ENCODE measurements at regions of chr2 and their contacts with region 1.

Region 1: DNA sequence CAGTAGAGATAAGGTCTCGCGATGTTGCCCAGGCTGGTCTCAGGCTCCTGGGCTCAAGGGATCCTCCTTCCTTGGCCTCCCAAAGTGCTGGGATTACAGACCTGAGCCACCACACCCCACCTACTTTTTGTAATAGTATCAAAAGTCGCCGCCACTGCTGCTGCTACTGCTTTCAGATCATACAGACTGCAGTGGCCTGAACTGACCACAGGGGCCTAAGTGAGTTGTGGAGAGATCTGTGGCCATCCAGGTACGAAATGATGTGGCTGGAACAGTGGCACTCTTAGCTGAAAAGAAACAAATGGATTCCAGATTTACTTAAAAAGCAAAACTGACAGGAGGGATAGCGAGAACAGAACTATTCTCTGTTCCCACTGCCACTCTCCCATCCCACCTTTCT is 32.9 kb upstream of the POMC start:
- DNase-seq: no peak
- H3K4me3 ChIP-seq: no peak overlapping the region
- H3K27ac ChIP-seq: no peak overlapping the region
- H3K4me1 ChIP-seq: no peaks in the 10 kb centered on the region
- H3K27me3 ChIP-seq: no peaks in the 10 kb centered on the region
- CTCF ChIP-seq: no peak

Region 2: DNA sequence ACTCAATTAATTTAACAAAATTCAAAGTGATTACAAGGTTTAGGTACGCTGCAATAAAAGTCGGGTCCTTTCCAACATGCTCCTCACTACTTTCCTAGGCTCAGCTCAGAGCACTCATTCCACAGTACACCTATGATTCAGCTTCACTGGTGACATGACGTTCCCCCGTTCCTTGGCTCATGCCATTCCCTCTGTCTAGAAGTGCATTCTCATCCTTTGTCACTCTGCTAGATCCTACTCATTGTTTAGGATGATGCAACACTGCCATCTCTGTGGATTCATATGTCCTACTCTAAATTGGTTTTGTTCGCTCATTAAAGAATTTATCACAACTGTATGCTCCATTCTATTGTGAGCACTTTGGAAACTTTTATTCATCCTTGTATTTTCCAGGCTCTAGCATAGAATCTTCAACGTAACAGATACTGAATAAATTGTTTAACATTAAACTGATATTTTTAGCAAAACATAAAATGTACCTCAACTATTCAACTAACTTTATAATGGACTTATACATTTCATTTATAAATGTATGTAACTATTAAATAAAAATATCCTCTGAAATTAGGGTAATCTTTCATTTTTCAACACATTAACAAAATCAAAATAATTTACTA is 947.9 kb before region 1 on chr2:
- CTCF ChIA-PET with region 1: no interaction called
- POLR2A ChIA-PET with region 1: no interaction called
- intact Hi-C with region 1: no loop called
- DNase-seq: peak; percentile 13
- H3K4me3 ChIP-seq: no peak overlapping the region
- H3K27ac ChIP-seq: no peak overlapping the region
- H3K4me1 ChIP-seq: no peaks in the 10 kb centered on the region
- H3K27me3 ChIP-seq: no peaks in the 10 kb centered on the region
- CTCF ChIP-seq: no peak

Region 3: GRCh38 chr2:24409700-24410556 is 791.3 kb before region 1 on chr2:
- CTCF ChIA-PET with region 1: no interaction called
- POLR2A ChIA-PET with region 1: no interaction called
- intact Hi-C with region 1: loop called (anchors 1 kb)
- DNase-seq: peak; percentile 83
- H3K4me3 ChIP-seq: no peak overlapping the region
- H3K27ac ChIP-seq: no peak overlapping the region
- H3K4me1 ChIP-seq: peaks cover 3% of the 10 kb centered on the region
- H3K27me3 ChIP-seq: no peaks in the 10 kb centered on the region
- CTCF ChIP-seq: peak; percentile 87

Region 4: GRCh38 chr2:24833821-24834732 is 367.2 kb before region 1 on chr2:
- CTCF ChIA-PET with region 1: no interaction called
- POLR2A ChIA-PET with region 1: no interaction called
- intact Hi-C with region 1: loop called (anchors 2 kb)
- DNase-seq: no peak
- H3K4me3 ChIP-seq: no peak overlapping the region
- H3K27ac ChIP-seq: peak overlapping the region; percentile 12
- H3K4me1 ChIP-seq: peaks cover 15% of the 10 kb centered on the region
- H3K27me3 ChIP-seq: no peaks in the 10 kb centered on the region
- CTCF ChIP-seq: no peak

Region 5: DNA sequence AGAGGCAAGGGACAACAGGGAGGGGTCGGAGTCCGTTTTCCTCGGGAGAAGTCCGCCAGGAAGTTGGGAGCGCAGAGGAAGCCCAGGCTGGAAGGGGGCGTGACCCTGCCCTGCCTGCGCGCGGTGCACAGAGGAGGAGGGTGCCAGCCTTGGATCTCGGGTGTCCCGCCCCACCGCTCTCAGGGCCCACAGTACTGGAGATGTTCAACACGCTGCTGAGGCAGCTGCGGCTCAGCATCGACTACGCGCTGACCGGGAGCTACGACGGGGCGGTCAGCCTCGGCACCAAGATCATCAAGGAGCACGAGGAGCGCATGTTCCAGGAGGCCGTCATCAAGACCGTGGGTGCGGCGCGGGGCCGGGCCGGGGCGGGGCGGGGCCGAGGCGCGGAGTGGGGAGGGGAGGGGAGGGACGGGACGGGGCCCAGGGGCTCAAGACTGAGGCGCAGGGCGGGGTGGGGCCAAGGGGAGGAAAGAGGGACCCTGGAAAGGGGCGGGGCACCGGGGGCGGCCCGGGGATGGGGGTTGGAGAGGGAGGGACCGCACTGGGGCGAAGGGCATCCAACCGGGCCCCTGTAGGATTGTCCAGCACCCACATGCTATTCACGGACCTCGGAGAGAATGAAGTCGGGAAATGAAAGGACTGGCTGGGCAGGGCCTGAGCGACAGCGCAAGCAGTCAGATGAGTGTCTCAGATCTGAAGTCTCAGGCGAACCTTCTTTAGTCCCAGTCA is 69.5 kb before region 1 on chr2:
- CTCF ChIA-PET with region 1: no interaction called
- POLR2A ChIA-PET with region 1: no interaction called
- intact Hi-C with region 1: loop called (anchors 5 kb)
- DNase-seq: no peak
- H3K4me3 ChIP-seq: no peak overlapping the region
- H3K27ac ChIP-seq: no peak overlapping the region
- H3K4me1 ChIP-seq: no peaks in the 10 kb centered on the region
- H3K27me3 ChIP-seq: peaks cover 28% of the 10 kb centered on the region
- CTCF ChIP-seq: no peak

Measured in A673 (cell line).